CD4-positive, alpha-beta T cell (primary cell): ENCODE measurements at regions of chr7 and their contacts with region 1.

Region 1: DNA sequence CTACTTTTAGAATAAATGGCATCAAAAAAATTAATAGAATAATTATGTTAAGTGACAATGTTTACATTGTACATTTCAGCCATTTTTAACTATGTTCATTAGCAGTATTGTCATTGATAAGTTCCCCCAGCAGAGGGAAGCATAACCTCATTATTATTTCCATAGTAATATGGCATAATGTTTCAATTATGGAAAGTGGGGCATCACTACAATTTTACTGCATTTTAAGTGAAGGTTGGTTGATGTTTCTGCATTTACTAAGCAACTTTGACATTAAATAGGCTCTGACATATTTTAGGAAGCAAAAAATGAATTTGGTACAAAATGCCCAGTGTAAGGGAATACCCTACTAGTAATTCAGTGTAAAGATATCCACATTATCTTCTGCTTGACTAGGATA is 218.3 kb downstream of the SEMA3A start:
- DNase-seq: peak in 4 of 14 experiments; percentile 11 to 59 (median 38)
- ATAC-seq: peak; percentile 59
- H3K4me3 ChIP-seq: no peak overlapping the region
- H3K4me3 Mint-ChIP-seq: no peak overlapping the region
- H3K27ac ChIP-seq: no peak overlapping the region
- H3K27ac Mint-ChIP-seq: no peak overlapping the region
- H3K4me1 ChIP-seq: no peaks in the 10 kb centered on the region
- H3K4me1 Mint-ChIP-seq: peaks cover 4% of the 10 kb centered on the region
- H3K27me3 ChIP-seq: no peaks in the 10 kb centered on the region
- H3K27me3 Mint-ChIP-seq: no peaks in the 10 kb centered on the region
- CTCF ChIP-seq: peak; percentile 64

Region 2: GRCh38 chr7:83347945-83348444 is 628.3 kb before region 1 on chr7:
- CTCF ChIA-PET with region 1: no interaction called
- POLR2A ChIA-PET with region 1: no interaction called
- intact Hi-C with region 1: no loop called
- DNase-seq: no peak
- ATAC-seq: no peak
- H3K4me3 ChIP-seq: no peak overlapping the region
- H3K4me3 Mint-ChIP-seq: no peak overlapping the region
- H3K27ac ChIP-seq: no peak overlapping the region
- H3K27ac Mint-ChIP-seq: no peak overlapping the region
- H3K4me1 ChIP-seq: no peaks in the 10 kb centered on the region
- H3K4me1 Mint-ChIP-seq: no peaks in the 10 kb centered on the region
- H3K27me3 ChIP-seq: no peaks in the 10 kb centered on the region
- H3K27me3 Mint-ChIP-seq: no peaks in the 10 kb centered on the region
- CTCF ChIP-seq: no peak

Region 3: GRCh38 chr7:83936056-83936708 is 40.1 kb before region 1 on chr7:
- CTCF ChIA-PET with region 1: no interaction called
- POLR2A ChIA-PET with region 1: no interaction called
- intact Hi-C with region 1: loop called in 1 of 2 experiments (anchors 2 kb)
- DNase-seq: peak; percentile 5 to 69 (median 34)
- ATAC-seq: peak; percentile 68
- H3K4me3 ChIP-seq: no peak overlapping the region
- H3K4me3 Mint-ChIP-seq: no peak overlapping the region
- H3K27ac ChIP-seq: no peak overlapping the region
- H3K27ac Mint-ChIP-seq: no peak overlapping the region
- H3K4me1 ChIP-seq: no peaks in the 10 kb centered on the region
- H3K4me1 Mint-ChIP-seq: no peaks in the 10 kb centered on the region
- H3K27me3 ChIP-seq: no peaks in the 10 kb centered on the region
- H3K27me3 Mint-ChIP-seq: peaks cover 3% of the 10 kb centered on the region
- CTCF ChIP-seq: peak; percentile 71

Region 4: DNA sequence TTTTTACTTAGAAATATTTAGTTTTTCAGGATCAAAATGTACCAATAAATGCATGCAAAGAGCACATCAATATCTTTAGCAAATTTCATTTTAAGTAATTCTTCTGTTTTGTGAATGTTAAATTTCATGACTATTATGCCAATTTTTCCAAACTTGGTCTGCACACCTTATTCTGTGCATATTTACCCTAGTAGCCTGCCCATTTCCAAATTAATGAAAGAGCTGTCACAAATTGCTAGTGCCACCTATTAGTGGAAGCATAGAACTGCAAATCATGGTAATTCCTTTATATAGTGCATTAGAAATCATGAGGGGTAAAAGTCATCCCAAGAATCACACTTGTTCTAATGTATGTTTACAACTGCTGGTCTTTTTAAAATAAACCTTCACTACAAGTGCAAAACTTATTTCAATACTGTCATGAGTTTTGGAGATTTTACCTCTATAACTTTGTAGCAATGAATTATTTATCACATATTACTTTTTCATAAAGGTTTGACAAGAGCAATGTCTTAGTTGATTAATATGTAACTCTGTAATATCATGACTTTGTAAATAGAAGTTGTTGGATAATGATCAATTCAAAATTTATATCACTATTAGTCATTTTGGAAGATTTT is 212.6 kb after region 1 on chr7:
- CTCF ChIA-PET with region 1: no interaction called
- POLR2A ChIA-PET with region 1: no interaction called
- intact Hi-C with region 1: loop called in 1 of 2 experiments (anchors 2 kb)
- DNase-seq: peak in 2 of 14 experiments; percentile 2 to 5
- ATAC-seq: no peak
- H3K4me3 ChIP-seq: no peak overlapping the region
- H3K4me3 Mint-ChIP-seq: no peak overlapping the region
- H3K27ac ChIP-seq: no peak overlapping the region
- H3K27ac Mint-ChIP-seq: no peak overlapping the region
- H3K4me1 ChIP-seq: no peaks in the 10 kb centered on the region
- H3K4me1 Mint-ChIP-seq: peaks cover 23% of the 10 kb centered on the region
- H3K27me3 ChIP-seq: no peaks in the 10 kb centered on the region
- H3K27me3 Mint-ChIP-seq: no peaks in the 10 kb centered on the region
- CTCF ChIP-seq: peak; percentile 52

Region 5: GRCh38 chr7:84454174-84454959 is 478.1 kb after region 1 on chr7:
- CTCF ChIA-PET with region 1: no interaction called
- POLR2A ChIA-PET with region 1: no interaction called
- intact Hi-C with region 1: loop called in 1 of 2 experiments (anchors 5 kb)
- DNase-seq: no peak
- ATAC-seq: no peak
- H3K4me3 ChIP-seq: no peak overlapping the region
- H3K4me3 Mint-ChIP-seq: no peak overlapping the region
- H3K27ac ChIP-seq: no peak overlapping the region
- H3K27ac Mint-ChIP-seq: no peak overlapping the region
- H3K4me1 ChIP-seq: no peaks in the 10 kb centered on the region
- H3K4me1 Mint-ChIP-seq: no peaks in the 10 kb centered on the region
- H3K27me3 ChIP-seq: no peaks in the 10 kb centered on the region
- H3K27me3 Mint-ChIP-seq: no peaks in the 10 kb centered on the region
- CTCF ChIP-seq: no peak

Region 6: DNA sequence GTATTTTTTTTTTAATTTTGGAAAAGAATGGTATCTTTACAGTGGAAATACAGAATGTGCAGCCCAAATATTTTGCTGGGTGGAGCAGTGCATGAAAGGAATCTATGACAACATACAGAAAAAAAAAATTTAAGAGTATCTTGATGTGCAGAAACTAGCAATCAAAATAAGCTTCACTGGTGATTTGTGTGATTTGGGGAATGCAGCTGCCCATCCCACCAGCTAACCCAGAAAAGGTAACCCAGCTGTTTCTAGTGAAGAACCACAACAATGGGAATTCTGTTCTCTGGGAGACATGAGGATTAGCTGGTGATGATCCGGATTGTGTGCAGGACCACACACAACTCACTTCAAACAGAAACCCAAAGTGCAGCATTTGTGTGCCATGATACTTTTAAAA is 835.1 kb after region 1 on chr7:
- CTCF ChIA-PET with region 1: no interaction called
- POLR2A ChIA-PET with region 1: no interaction called
- intact Hi-C with region 1: no loop called
- DNase-seq: no peak
- ATAC-seq: no peak
- H3K4me3 ChIP-seq: no peak overlapping the region
- H3K4me3 Mint-ChIP-seq: no peak overlapping the region
- H3K27ac ChIP-seq: no peak overlapping the region
- H3K27ac Mint-ChIP-seq: no peak overlapping the region
- H3K4me1 ChIP-seq: no peaks in the 10 kb centered on the region
- H3K4me1 Mint-ChIP-seq: no peaks in the 10 kb centered on the region
- H3K27me3 ChIP-seq: no peaks in the 10 kb centered on the region
- H3K27me3 Mint-ChIP-seq: no peaks in the 10 kb centered on the region
- CTCF ChIP-seq: no peak

Region 7: GRCh38 chr7:85023045-85023712 is 1046.9 kb after region 1 on chr7:
- CTCF ChIA-PET with region 1: no interaction called
- POLR2A ChIA-PET with region 1: no interaction called
- intact Hi-C with region 1: loop called (anchors 1 kb)
- DNase-seq: peak in 5 of 14 experiments; percentile 4 to 53 (median 38)
- ATAC-seq: no peak
- H3K4me3 ChIP-seq: no peak overlapping the region
- H3K4me3 Mint-ChIP-seq: no peak overlapping the region
- H3K27ac ChIP-seq: no peak overlapping the region
- H3K27ac Mint-ChIP-seq: no peak overlapping the region
- H3K4me1 ChIP-seq: no peaks in the 10 kb centered on the region
- H3K4me1 Mint-ChIP-seq: no peaks in the 10 kb centered on the region
- H3K27me3 ChIP-seq: no peaks in the 10 kb centered on the region
- H3K27me3 Mint-ChIP-seq: peaks cover 3% of the 10 kb centered on the region
- CTCF ChIP-seq: peak; percentile 68

Region 8: DNA sequence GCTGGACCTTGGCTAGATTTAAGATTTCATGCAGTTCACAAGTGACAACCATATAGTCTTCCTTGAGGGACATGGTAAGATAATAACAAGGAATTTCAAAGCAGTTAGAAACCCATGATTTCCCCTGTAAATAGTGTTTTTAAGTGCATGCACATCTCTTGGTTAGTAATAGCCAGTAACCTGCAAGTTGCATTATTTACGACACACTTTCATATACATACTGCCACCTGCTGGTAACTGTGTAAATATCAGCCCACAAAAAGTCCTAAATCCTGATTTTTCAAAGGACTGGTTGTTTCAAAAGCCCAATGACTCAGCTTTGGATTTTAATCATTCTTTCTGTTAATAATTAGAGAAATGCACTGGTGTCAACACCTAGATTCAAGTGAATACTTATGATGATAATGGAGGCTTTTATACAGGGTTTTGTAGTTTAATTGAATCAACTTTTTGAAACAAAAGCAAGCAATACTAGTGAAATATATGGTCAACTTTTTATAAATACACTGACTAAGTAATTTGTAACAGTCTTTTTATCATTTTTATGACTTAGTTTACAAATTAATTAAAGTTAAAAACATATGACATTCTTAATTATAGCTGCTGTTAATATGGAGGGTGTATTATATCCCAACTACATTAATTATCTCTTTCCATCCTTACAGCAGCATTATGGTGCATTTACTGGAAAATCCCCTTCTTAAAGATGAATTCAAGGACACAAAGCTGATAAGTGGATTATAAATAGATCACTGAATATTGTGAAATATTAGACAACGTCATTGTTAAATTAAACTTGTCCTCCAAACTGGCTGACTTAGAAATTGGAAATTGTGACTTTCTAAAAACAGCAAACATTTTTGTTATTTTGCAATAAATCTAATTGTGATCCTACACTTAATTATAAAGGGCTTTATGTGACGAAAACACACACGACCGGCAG is 1578.2 kb after region 1 on chr7:
- CTCF ChIA-PET with region 1: no interaction called
- POLR2A ChIA-PET with region 1: no interaction called
- intact Hi-C with region 1: loop called in 1 of 2 experiments (anchors 10 kb)
- DNase-seq: peak in 3 of 14 experiments; percentile 19 to 35 (median 27)
- ATAC-seq: peak; percentile 44
- H3K4me3 ChIP-seq: no peak overlapping the region
- H3K4me3 Mint-ChIP-seq: no peak overlapping the region
- H3K27ac ChIP-seq: no peak overlapping the region
- H3K27ac Mint-ChIP-seq: no peak overlapping the region
- H3K4me1 ChIP-seq: no peaks in the 10 kb centered on the region
- H3K4me1 Mint-ChIP-seq: no peaks in the 10 kb centered on the region
- H3K27me3 ChIP-seq: no peaks in the 10 kb centered on the region
- H3K27me3 Mint-ChIP-seq: no peaks in the 10 kb centered on the region
- CTCF ChIP-seq: peak; percentile 59